ENCODE measurements at regions of chr20 and their contacts with region 1.

Region 1: GRCh38 chr20:36605399-36606157 is at the start of gene RAB5IF:
- DNase-seq: peak; percentile 99
- H3K4me3 Mint-ChIP-seq: peak within 1 kb of the TSS; percentile 97
- H3K27ac Mint-ChIP-seq: peak within 1 kb of the TSS; percentile 95
- H3K4me1 Mint-ChIP-seq: peaks cover 25% of the 10 kb centered on the region
- H3K27me3 Mint-ChIP-seq: no peaks in the 10 kb centered on the region
- total RNA-seq, gene RAB5IF: 79.8 to 85.9 TPM

Region 2: GRCh38 chr20:36460648-36461599 is 144.7 kb before region 1 on chr20:
- CTCF ChIA-PET with region 1: interaction called, 5 read pairs
- intact Hi-C with region 1: loop called (anchors 2 kb)
- DNase-seq: peak; percentile 89
- H3K4me3 Mint-ChIP-seq: peak overlapping the region; percentile 74
- H3K27ac Mint-ChIP-seq: peak overlapping the region; percentile 52
- H3K4me1 Mint-ChIP-seq: peaks cover 47% of the 10 kb centered on the region
- H3K27me3 Mint-ChIP-seq: no peaks in the 10 kb centered on the region

Region 3: GRCh38 chr20:36550797-36551299 is 54.7 kb before region 1 on chr20:
- CTCF ChIA-PET with region 1: interaction called, 4 read pairs
- intact Hi-C with region 1: loop called (anchors 1 kb)
- DNase-seq: no peak
- H3K4me3 Mint-ChIP-seq: no peak overlapping the region
- H3K27ac Mint-ChIP-seq: no peak overlapping the region
- H3K4me1 Mint-ChIP-seq: no peaks in the 10 kb centered on the region
- H3K27me3 Mint-ChIP-seq: no peaks in the 10 kb centered on the region

Region 4: DNA sequence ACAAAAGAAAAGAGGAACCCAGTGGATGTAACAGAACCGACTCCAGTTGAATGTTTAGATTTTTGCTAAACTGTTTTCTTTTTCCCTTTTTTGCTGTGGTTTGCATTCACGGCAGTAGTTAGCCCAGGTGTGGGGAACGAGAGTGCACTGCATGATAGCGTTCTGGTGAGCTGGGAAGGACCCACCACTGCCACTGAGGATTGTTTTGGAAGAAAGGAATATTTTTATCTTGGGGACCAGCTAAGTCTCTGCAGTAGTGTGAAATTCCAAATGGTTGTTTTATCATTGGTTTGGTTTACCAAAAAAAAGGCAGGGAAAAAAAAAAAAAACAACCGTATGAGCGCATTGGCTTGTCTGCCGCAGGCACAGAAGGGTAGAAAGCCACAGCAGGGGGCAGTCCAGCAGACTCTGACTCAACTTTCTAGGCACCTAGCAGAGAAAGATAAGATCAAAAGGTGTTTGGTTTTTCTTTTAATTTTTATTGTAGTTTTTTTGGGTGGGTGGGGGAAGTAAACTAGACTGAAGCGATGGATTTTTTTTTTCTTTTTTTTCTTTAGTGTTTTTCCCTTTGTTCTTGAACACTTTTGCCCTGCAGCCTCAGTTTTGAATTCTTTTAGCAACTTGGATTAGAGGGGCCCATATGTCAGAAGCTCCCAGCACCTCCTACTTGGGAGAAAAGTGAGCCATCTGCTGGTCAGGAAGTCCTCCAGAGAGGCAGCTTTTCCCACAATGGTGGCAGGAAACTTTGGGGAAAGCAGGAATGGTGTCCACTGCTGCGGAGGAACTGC is 13.5 kb before region 1 on chr20:
- CTCF ChIA-PET with region 1: interaction called, 54 read pairs
- intact Hi-C with region 1: loop called (anchors 1 kb)
- DNase-seq: peak; percentile 76
- H3K4me3 Mint-ChIP-seq: no peak overlapping the region
- H3K27ac Mint-ChIP-seq: peak overlapping the region; percentile 75
- H3K4me1 Mint-ChIP-seq: peaks cover 56% of the 10 kb centered on the region
- H3K27me3 Mint-ChIP-seq: no peaks in the 10 kb centered on the region

Region 5: DNA sequence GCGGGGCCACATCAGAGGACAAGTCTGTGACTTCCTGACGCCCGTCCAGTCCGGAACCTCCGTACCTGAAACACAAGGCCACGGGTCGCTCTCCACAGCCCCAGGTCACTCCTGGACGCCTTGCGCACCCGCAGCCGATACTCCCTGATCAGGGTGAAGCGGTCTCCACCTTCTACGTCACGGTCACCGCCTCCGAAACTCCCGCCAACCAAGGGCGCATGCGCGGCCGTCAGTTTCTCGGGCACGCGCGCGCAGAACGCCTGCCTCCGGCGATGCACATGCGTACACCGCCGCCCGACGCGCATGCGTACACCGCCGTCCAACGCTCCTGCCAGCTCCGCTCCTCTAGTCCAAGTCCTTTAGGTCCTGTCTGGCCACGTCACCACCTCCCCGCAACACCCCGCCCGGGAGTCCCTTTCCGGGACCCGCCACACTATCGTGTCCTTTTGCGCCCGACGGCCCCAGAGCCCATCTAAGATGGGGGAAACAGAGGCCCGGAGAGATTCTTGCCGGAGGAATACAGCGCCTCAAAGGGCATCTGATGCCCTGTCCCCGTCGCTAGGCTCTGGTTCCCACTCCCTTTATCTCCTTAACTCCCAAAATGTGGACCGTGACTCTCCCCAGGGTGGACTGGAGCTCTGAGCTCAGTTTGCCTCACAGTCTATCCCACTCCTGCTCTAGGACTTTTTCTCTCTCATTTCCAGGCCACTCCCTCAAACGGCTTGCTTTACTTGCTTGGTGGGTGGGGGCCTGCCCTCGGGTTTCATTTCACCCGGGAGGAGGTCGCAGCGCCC is 168.2 kb after region 1 on chr20 and contains the start of gene DSN1:
- CTCF ChIA-PET with region 1: interaction called, 3 read pairs
- intact Hi-C with region 1: loop called (anchors 1 kb)
- DNase-seq: peak; percentile 98
- H3K4me3 Mint-ChIP-seq: peak within 1 kb of the TSS; percentile 97
- H3K27ac Mint-ChIP-seq: peak within 1 kb of the TSS; percentile 97
- H3K4me1 Mint-ChIP-seq: peaks cover 21% of the 10 kb centered on the region
- H3K27me3 Mint-ChIP-seq: no peaks in the 10 kb centered on the region
- total RNA-seq, gene DSN1: 23.0 to 24.7 TPM

Measured in activated naive CD4-positive, alpha-beta T cell treated with anti-CD3 and anti-CD28 coated beads for 36 hours (primary cell).